Endothelial cell of umbilical vein (primary cell): ENCODE measurements at regions of chr7 and their contacts with region 1.

Region 1: GRCh38 chr7:116560021-116560970 is 35.5 kb downstream of the CAV1 start:
- DNase-seq: no peak
- H3K4me3 ChIP-seq: no peak overlapping the region
- H3K27ac ChIP-seq: no peak overlapping the region
- H3K4me1 ChIP-seq: peaks cover 4% of the 10 kb centered on the region
- H3K27me3 ChIP-seq: no peaks in the 10 kb centered on the region
- CTCF ChIP-seq: no peak
- POLR2A ChIP-seq: no peak

Region 2: DNA sequence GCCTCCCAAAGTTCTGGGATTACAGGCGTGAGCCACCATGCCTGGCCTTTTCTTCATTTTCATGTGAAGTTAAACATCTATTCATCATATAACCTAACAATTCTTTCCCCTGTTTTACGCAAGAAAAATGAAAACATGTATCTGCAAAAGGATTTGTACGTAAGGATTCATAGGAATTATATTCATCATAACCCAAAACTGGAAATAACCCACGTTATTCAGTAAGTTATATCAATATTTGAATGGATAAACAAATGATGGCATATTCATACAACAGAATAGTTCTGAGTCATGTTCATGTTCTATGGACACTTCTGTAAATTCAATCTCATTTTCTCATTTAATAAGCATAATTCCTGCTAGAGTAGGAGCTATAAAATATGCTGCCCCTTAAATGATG is 95.9 kb before region 1 on chr7:
- CTCF ChIA-PET with region 1: no interaction called
- POLR2A ChIA-PET with region 1: no interaction called
- dilution Hi-C with region 1: no loop called
- intact Hi-C with region 1: no loop called
- DNase-seq: no peak
- H3K4me3 ChIP-seq: no peak overlapping the region
- H3K27ac ChIP-seq: no peak overlapping the region
- H3K4me1 ChIP-seq: peaks cover 26% of the 10 kb centered on the region
- H3K27me3 ChIP-seq: no peaks in the 10 kb centered on the region
- CTCF ChIP-seq: no peak
- POLR2A ChIP-seq: no peak

Region 3: DNA sequence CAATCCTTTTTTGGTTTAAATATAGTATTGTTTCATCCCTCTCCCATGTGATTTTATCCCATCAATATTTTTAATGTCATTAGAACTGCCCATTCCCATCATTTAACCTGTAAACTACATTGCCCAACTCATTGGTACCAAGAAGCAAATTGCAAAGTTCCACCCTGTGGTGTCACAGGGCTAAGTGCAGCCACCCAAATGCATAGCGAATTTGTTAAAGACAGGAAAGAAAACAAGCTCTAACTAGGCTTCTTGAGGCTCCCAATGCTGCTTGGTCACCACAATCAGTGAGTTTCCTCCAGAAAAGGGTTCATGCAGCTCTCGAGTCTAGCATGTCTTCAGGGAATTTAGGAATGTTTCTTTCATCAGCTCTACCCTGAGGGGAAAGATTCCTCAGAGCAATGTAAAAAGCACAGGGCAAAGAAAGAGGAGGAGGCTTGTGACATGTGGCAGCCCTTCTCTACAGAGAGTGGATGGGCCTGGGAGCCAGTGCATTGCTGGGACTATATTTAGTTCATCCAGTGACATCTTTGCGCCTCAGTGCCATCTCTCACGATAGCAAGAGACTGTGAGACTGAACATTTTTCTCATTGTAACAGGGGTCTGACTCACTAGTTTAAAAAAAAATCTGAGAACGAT is 22.6 kb after region 1 on chr7:
- CTCF ChIA-PET with region 1: interaction called, 36 read pairs
- POLR2A ChIA-PET with region 1: no interaction called
- dilution Hi-C with region 1: no loop called
- intact Hi-C with region 1: no loop called
- DNase-seq: peak; percentile 32
- H3K4me3 ChIP-seq: no peak overlapping the region
- H3K27ac ChIP-seq: no peak overlapping the region
- H3K4me1 ChIP-seq: peaks cover 25% of the 10 kb centered on the region
- H3K27me3 ChIP-seq: no peaks in the 10 kb centered on the region
- CTCF ChIP-seq: no peak
- POLR2A ChIP-seq: no peak